Prostate gland (tissue), 2 donors: ENCODE measurements at regions of chr21 and their contacts with region 1.

Region 1: GRCh38 chr21:38755681-38756371 is 49.9 kb upstream of the ETS2 start:
- DNase-seq: no peak
- H3K4me3 ChIP-seq: no peak overlapping the region
- H3K27ac ChIP-seq: peak overlapping the region in 1 of 2 donors; percentile 36
- H3K4me1 ChIP-seq: no peaks in the 10 kb centered on the region
- H3K27me3 ChIP-seq: no peaks in the 10 kb centered on the region
- CTCF ChIP-seq: no peak
- POLR2A ChIP-seq: no peak

Region 2: DNA sequence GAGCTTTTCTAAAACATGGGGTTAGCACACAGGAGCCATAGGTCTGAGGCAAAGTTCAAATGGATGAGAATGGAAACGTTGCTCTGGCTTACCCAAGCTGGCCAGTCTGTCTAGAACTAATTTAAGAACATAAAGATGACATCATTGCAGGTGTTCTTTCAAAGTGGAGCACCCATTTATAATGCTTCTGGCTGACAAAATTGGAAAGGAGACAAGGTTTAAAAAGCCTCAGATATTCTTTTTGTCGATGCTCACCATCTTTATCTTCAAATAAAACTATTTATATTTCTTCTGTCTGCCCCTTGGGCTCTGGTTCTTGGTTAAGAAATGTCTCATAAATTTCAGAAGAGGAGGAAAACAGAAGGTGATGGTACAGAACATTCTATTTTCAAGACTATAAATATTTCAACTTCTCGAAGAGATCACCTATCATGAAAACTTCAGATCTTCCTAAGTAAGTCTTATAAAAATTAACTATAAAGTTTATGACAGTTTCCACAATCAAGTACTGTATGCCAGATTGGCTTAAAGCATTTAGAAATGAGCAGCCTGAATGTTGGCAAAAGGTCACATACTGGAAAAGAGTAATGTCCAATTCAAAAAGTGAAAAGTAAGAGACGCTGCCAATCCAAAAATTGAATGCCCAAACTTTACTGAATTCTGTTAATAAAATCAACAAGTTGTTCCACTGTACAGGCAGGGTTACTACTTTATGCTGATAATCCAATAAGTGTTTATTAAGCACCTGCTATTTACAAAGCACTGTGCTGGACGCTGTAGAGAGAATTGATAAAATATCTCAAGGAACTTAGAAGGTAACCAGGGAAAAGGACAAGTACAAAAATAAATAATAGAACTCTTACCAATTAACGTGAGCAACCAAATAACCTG is 142.0 kb after region 1 on chr21:
- intact Hi-C with region 1: loop called (anchors 10 kb)
- DNase-seq: peak; percentile 38
- H3K4me3 ChIP-seq: no peak overlapping the region
- H3K27ac ChIP-seq: peak overlapping the region; percentile 11 to 55
- H3K4me1 ChIP-seq: no peaks in the 10 kb centered on the region
- H3K27me3 ChIP-seq: no peaks in the 10 kb centered on the region
- CTCF ChIP-seq: no peak
- POLR2A ChIP-seq: no peak

Region 3: GRCh38 chr21:38937844-38938742 is 182.3 kb after region 1 on chr21:
- intact Hi-C with region 1: no loop called
- DNase-seq: no peak
- H3K4me3 ChIP-seq: no peak overlapping the region
- H3K27ac ChIP-seq: no peak overlapping the region
- H3K4me1 ChIP-seq: no peaks in the 10 kb centered on the region
- H3K27me3 ChIP-seq: peaks cover under 1% of the 10 kb centered on the region
- CTCF ChIP-seq: no peak
- POLR2A ChIP-seq: no peak

Region 4: DNA sequence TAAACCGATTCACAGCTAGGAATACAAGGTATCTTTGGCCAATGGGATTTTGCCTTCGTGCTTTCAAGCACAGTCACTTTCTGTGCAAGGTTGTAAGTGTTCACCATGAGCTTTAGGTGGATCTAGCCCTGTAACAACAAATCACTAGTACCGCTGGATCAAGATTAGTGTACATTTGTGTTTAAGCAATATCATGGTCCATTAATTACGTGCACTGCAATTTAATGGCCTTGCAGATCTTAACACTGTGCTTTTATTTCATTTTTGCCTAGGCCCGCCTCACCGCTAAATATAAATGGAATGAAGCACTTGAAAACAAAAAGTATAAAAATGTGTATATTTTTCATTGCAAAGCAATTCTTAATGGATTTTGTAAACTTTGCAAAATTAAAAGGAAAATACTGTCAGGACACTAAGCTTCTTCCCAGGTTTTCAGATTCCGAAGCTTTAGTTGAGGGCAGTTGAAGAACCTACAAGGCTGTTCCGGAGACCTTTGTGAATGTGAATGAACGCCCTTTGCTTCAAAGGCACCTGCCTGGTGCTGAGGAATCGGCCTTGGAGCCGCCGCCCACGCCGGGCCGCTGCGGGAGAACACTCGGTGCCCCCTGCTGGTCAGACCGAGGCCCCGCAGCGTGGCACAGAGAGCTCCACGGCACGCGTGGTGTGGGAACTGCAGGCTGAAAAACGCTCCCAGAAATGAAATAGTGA is 1630.2 kb after region 1 on chr21:
- intact Hi-C with region 1: no loop called
- DNase-seq: peak; percentile 56
- H3K4me3 ChIP-seq: no peak overlapping the region
- H3K27ac ChIP-seq: no peak overlapping the region
- H3K4me1 ChIP-seq: no peaks in the 10 kb centered on the region
- H3K27me3 ChIP-seq: no peaks in the 10 kb centered on the region
- CTCF ChIP-seq: peak; percentile 70 to 88 (median 82)
- POLR2A ChIP-seq: no peak